Calu3 (cell line): ENCODE measurements at regions of chr10 and their contacts with region 1.

Region 1: GRCh38 chr10:97278491-97278989 is 13.9 kb downstream of the ARHGAP19 start:
- DNase-seq: no peak
- H3K4me3 Mint-ChIP-seq: no peak overlapping the region
- H3K27ac Mint-ChIP-seq: no peak overlapping the region
- H3K4me1 Mint-ChIP-seq: no peaks in the 10 kb centered on the region
- H3K27me3 Mint-ChIP-seq: no peaks in the 10 kb centered on the region
- CTCF ChIP-seq: peak; percentile 14

Region 2: DNA sequence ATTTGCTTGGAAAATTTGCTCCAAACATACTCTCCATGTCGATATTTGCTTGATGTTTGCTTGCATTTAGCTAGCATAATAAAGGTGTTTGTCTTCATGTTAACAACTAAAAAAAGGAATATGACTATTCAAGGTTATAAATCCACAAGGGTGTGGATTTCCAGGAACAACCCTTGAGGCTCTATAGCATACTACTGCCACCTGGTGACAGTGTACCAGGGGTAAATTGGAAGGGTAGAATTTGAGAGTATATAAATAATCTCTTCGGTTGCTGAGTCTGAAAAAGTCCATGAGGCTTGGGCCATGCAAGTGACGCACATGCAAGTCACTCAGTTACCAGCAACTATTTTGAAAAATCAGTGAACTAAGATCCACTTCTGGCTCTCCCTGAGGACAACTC is 161.2 kb before region 1 on chr10:
- CTCF ChIA-PET with region 1: no interaction called
- intact Hi-C with region 1: no loop called
- DNase-seq: peak; percentile 30
- H3K4me3 Mint-ChIP-seq: no peak overlapping the region
- H3K27ac Mint-ChIP-seq: no peak overlapping the region
- H3K4me1 Mint-ChIP-seq: no peaks in the 10 kb centered on the region
- H3K27me3 Mint-ChIP-seq: peaks cover 72% of the 10 kb centered on the region
- CTCF ChIP-seq: peak; percentile 32

Region 3: DNA sequence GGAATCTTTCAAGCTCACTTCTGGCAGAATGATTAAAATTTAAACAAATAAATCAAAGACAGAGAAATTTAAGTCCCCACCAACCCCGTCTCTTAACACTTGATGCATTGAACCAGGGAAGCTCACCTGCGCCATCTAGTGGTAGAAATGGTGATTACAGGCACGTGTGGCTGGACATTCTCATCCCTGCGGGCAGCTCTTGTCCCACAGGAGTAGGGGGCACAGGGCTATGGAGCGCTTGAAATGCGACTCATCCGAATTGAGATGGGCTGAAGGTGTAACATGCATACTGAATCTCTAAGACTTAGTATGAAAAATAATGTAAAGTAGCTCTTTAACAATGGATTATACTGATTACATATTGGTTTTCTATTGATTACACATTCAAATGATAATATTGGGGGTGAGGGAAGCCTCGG is 68.0 kb before region 1 on chr10:
- CTCF ChIA-PET with region 1: no interaction called
- intact Hi-C with region 1: no loop called
- DNase-seq: peak; percentile 64
- H3K4me3 Mint-ChIP-seq: no peak overlapping the region
- H3K27ac Mint-ChIP-seq: no peak overlapping the region
- H3K4me1 Mint-ChIP-seq: no peaks in the 10 kb centered on the region
- H3K27me3 Mint-ChIP-seq: peaks cover 44% of the 10 kb centered on the region
- CTCF ChIP-seq: peak; percentile 77

Region 4: GRCh38 chr10:97333560-97334369 is 55.2 kb after region 1 on chr10:
- CTCF ChIA-PET with region 1: interaction called, 8 read pairs
- intact Hi-C with region 1: loop called (anchors 2 kb)
- DNase-seq: peak; percentile 22
- H3K4me3 Mint-ChIP-seq: peak overlapping the region; percentile 82
- H3K27ac Mint-ChIP-seq: peak overlapping the region; percentile 58
- H3K4me1 Mint-ChIP-seq: peaks cover 29% of the 10 kb centered on the region
- H3K27me3 Mint-ChIP-seq: no peaks in the 10 kb centered on the region
- CTCF ChIP-seq: no peak

Region 5: DNA sequence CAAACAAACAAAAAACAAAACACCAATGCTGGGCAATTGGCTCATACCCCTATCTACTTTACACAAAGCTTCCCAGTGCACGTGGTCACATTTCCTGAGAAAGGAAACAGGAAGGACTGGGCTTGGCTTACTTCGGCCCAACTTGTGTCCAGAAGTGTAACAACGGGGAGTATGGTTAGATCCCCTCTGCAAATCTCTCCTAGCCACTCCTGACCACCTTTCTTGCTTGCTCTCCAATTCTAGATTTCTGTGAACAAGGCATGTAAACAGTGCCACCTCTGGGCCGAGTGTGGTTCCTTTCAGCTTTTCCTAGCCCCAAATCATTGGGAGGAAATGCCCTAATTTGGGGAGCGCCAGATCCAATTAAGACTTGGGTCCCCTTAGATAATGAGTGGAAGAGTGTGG is 77.0 kb after region 1 on chr10:
- CTCF ChIA-PET with region 1: interaction called, 4 read pairs
- intact Hi-C with region 1: loop called (anchors 2 kb)
- DNase-seq: no peak
- H3K4me3 Mint-ChIP-seq: no peak overlapping the region
- H3K27ac Mint-ChIP-seq: no peak overlapping the region
- H3K4me1 Mint-ChIP-seq: no peaks in the 10 kb centered on the region
- H3K27me3 Mint-ChIP-seq: no peaks in the 10 kb centered on the region
- CTCF ChIP-seq: no peak